CD8-positive, alpha-beta T cell (primary cell): ENCODE measurements at regions of chr6 and their contacts with region 1.

Region 1: DNA sequence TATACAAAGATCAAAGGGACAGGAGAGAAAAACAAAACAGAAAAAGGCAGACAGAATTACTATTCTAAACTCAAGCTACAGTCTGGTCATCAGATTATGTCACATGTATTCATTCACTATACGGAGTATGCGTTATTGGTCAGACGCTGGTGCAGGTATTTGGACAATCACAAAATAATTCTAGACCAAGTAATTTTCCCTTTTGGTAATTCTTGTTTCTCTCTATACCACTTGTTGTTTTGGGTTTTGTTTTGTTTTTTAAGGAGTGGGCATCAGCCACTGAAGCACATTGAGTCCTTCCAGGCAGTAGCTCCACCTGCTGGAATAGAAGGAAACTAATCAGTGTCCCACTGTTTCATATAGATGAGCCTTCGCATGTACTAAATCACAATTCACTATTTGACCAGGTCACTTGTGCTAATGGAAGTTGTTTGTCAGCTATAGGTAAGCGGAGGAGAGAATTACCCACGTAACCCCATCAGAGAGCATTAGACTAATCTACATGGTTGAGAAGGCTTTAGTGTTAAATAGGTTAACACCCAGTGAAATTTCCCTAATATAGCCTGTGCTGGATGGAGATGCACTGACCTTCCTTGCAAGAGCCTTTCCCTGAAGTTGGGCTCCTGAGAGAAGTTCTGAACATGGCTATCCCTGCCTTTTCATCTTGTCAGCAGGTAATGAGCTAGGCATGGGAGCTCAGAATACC is 77.9 kb downstream of the TNFAIP3 start:
- DNase-seq: peak in 3 of 9 experiments; percentile 20 to 69 (median 53)
- ATAC-seq: peak; percentile 68
- H3K4me3 ChIP-seq: no peak overlapping the region
- H3K4me3 Mint-ChIP-seq: no peak overlapping the region
- H3K27ac ChIP-seq: no peak overlapping the region
- H3K27ac Mint-ChIP-seq: no peak overlapping the region
- H3K4me1 ChIP-seq: peaks cover 18% of the 10 kb centered on the region
- H3K4me1 Mint-ChIP-seq: peaks cover 22% of the 10 kb centered on the region
- H3K27me3 ChIP-seq: no peaks in the 10 kb centered on the region
- H3K27me3 Mint-ChIP-seq: no peaks in the 10 kb centered on the region
- CTCF ChIP-seq: peak; percentile 72

Region 2: GRCh38 chr6:137697267-137697938 is 247.5 kb before region 1 on chr6:
- CTCF ChIA-PET with region 1: interaction called, 12 read pairs
- POLR2A ChIA-PET with region 1: interaction called, 3 read pairs
- intact Hi-C with region 1: no loop called
- DNase-seq: no peak
- ATAC-seq: no peak
- H3K4me3 ChIP-seq: no peak overlapping the region
- H3K4me3 Mint-ChIP-seq: no peak overlapping the region
- H3K27ac ChIP-seq: no peak overlapping the region
- H3K27ac Mint-ChIP-seq: no peak overlapping the region
- H3K4me1 ChIP-seq: peaks cover 12% of the 10 kb centered on the region
- H3K4me1 Mint-ChIP-seq: peaks cover 14% of the 10 kb centered on the region
- H3K27me3 ChIP-seq: no peaks in the 10 kb centered on the region
- H3K27me3 Mint-ChIP-seq: peaks cover 2% of the 10 kb centered on the region
- CTCF ChIP-seq: no peak

Region 3: GRCh38 chr6:137873273-137873762 is 71.6 kb before region 1 on chr6:
- CTCF ChIA-PET with region 1: interaction called, 72 read pairs
- POLR2A ChIA-PET with region 1: interaction called, 18 read pairs
- intact Hi-C with region 1: loop called (anchors 1 to 5 kb)
- DNase-seq: peak in 5 of 9 experiments; percentile 39 to 90 (median 54)
- ATAC-seq: peak; percentile 7
- H3K4me3 ChIP-seq: no peak overlapping the region
- H3K4me3 Mint-ChIP-seq: peak overlapping the region; percentile 98
- H3K27ac ChIP-seq: peak overlapping the region in 1 of 2 experiments; percentile 24
- H3K27ac Mint-ChIP-seq: peak overlapping the region; percentile 29
- H3K4me1 ChIP-seq: peaks cover 53% of the 10 kb centered on the region
- H3K4me1 Mint-ChIP-seq: peaks cover 71% of the 10 kb centered on the region
- H3K27me3 ChIP-seq: no peaks in the 10 kb centered on the region
- H3K27me3 Mint-ChIP-seq: no peaks in the 10 kb centered on the region
- CTCF ChIP-seq: no peak

Region 4: GRCh38 chr6:137927777-137928218 is 17.1 kb before region 1 on chr6:
- CTCF ChIA-PET with region 1: interaction called, 6 read pairs
- POLR2A ChIA-PET with region 1: interaction called, 5 read pairs
- intact Hi-C with region 1: loop called in 1 of 2 experiments (anchors 1 kb)
- DNase-seq: peak; percentile 49 to 95 (median 75)
- ATAC-seq: peak; percentile 99
- H3K4me3 ChIP-seq: no peak overlapping the region
- H3K4me3 Mint-ChIP-seq: peak overlapping the region; percentile 36
- H3K27ac ChIP-seq: peak overlapping the region; percentile 21 to 59
- H3K27ac Mint-ChIP-seq: peak overlapping the region; percentile 91
- H3K4me1 ChIP-seq: peaks cover 38% of the 10 kb centered on the region
- H3K4me1 Mint-ChIP-seq: peaks cover 41% of the 10 kb centered on the region
- H3K27me3 ChIP-seq: no peaks in the 10 kb centered on the region
- H3K27me3 Mint-ChIP-seq: no peaks in the 10 kb centered on the region
- CTCF ChIP-seq: no peak

Region 5: GRCh38 chr6:137975188-137975940 is 30.4 kb after region 1 on chr6:
- CTCF ChIA-PET with region 1: interaction called, 11 read pairs
- POLR2A ChIA-PET with region 1: no interaction called
- intact Hi-C with region 1: loop called in 1 of 2 experiments (anchors 2 kb)
- DNase-seq: peak in 5 of 9 experiments; percentile 19 to 89 (median 38)
- ATAC-seq: peak; percentile 80
- H3K4me3 ChIP-seq: peak overlapping the region; percentile 18 to 21
- H3K4me3 Mint-ChIP-seq: peak overlapping the region; percentile 74
- H3K27ac ChIP-seq: peak overlapping the region; percentile 39 to 85
- H3K27ac Mint-ChIP-seq: peak overlapping the region; percentile 92
- H3K4me1 ChIP-seq: peaks cover 24% of the 10 kb centered on the region
- H3K4me1 Mint-ChIP-seq: peaks cover 40% of the 10 kb centered on the region
- H3K27me3 ChIP-seq: no peaks in the 10 kb centered on the region
- H3K27me3 Mint-ChIP-seq: no peaks in the 10 kb centered on the region
- CTCF ChIP-seq: peak; percentile 75

Region 6: GRCh38 chr6:137980777-137981176 is 35.8 kb after region 1 on chr6:
- CTCF ChIA-PET with region 1: interaction called, 11 read pairs
- POLR2A ChIA-PET with region 1: no interaction called
- intact Hi-C with region 1: loop called in 1 of 2 experiments (anchors 2 kb)
- DNase-seq: no peak
- ATAC-seq: no peak
- H3K4me3 ChIP-seq: no peak overlapping the region
- H3K4me3 Mint-ChIP-seq: no peak overlapping the region
- H3K27ac ChIP-seq: no peak overlapping the region
- H3K27ac Mint-ChIP-seq: no peak overlapping the region
- H3K4me1 ChIP-seq: peaks cover 12% of the 10 kb centered on the region
- H3K4me1 Mint-ChIP-seq: peaks cover 23% of the 10 kb centered on the region
- H3K27me3 ChIP-seq: no peaks in the 10 kb centered on the region
- H3K27me3 Mint-ChIP-seq: no peaks in the 10 kb centered on the region
- CTCF ChIP-seq: no peak

Region 7: GRCh38 chr6:138025528-138025978 is 80.6 kb after region 1 on chr6:
- CTCF ChIA-PET with region 1: no interaction called
- POLR2A ChIA-PET with region 1: no interaction called
- intact Hi-C with region 1: no loop called
- DNase-seq: no peak
- ATAC-seq: no peak
- H3K4me3 ChIP-seq: no peak overlapping the region
- H3K4me3 Mint-ChIP-seq: no peak overlapping the region
- H3K27ac ChIP-seq: no peak overlapping the region
- H3K27ac Mint-ChIP-seq: no peak overlapping the region
- H3K4me1 ChIP-seq: no peaks in the 10 kb centered on the region
- H3K4me1 Mint-ChIP-seq: no peaks in the 10 kb centered on the region
- H3K27me3 ChIP-seq: no peaks in the 10 kb centered on the region
- H3K27me3 Mint-ChIP-seq: peaks cover 5% of the 10 kb centered on the region
- CTCF ChIP-seq: no peak